MCF 10A (cell line): ENCODE measurements at regions of chr3 and their contacts with region 1.

Region 1: DNA sequence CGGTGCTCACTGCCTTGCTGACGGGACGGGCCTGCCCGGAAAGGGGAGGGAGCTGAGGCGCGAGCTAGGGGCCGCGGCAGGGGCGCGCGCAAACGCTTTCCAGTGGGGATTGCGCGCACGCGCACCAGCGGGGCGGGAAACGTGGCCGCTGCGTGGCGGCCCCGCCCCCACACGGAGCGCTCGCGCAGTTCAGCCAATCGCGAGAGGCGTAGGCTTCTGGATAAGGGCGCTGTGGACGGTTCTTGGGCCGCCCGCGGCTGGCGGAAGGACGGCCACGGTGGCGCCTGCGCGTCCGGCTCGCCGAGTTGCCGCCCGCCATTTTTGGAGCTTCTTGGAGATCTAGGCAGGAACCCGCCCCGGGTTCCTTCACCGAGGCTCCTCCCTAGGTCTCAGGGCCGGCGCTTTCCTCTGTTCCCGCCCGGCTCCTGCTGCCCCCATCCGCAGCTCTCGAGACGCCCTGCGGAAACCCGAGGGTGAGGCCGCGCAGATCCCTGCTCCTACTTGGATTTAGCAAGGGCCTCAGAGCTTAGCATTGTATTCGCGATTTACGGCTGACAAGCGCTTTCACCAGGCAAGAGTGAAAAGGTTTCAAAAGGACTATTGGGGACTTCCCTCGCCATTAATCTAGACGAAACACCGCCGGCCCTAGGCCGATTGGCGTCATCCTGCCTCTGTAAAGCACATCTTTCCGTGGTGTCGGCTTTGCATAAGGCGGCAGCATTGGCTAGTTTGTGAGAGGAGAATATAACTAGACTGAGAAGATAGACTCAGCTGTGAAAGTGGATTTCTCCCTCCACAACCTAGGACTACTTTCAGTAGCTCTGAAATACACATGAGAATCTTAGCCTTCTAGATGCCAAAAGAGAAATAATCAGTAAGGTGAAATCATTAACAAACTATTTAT is 496 bp upstream of the STAG1 start:
- DNase-seq: peak; percentile 97
- H3K4me3 Mint-ChIP-seq: peak overlapping the region; percentile 79
- H3K27ac Mint-ChIP-seq: peak overlapping the region; percentile 97
- H3K4me1 Mint-ChIP-seq: peaks cover 17% of the 10 kb centered on the region
- H3K27me3 Mint-ChIP-seq: no peaks in the 10 kb centered on the region
- CTCF ChIP-seq: peak; percentile 6

Region 2: DNA sequence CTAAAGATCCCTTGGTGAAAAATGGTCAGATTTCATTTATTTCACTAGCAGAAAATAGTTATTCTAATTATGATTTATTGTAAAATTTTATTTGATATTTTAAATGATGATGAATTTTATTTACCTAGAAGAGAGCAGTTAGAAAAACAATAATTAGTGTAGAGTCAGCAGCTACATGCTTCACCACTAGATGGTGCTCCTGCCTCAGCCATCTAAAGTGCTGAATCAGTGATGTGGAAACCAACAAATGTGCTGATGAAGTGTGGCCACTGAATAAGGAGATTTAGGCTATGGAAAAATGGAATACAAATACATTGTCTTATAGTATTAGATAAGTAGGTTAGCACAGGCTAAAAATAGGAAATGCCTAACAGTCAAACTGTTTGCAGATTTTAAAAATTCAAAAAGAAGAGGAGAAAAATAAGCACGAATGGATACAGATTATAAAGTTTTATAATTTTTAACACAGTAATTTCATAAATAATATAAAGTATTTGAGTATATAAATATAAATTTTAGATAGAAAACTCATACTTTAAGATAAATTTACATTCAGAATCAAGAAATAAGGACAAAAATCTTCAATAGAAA is 677.4 kb before region 1 on chr3:
- CTCF ChIA-PET with region 1: interaction called, 21 read pairs
- POLR2A ChIA-PET with region 1: interaction called, 8 read pairs
- intact Hi-C with region 1: loop called (anchors 1 kb)
- DNase-seq: peak; percentile 86
- H3K4me3 Mint-ChIP-seq: no peak overlapping the region
- H3K27ac Mint-ChIP-seq: peak overlapping the region; percentile 8
- H3K4me1 Mint-ChIP-seq: peaks cover 22% of the 10 kb centered on the region
- H3K27me3 Mint-ChIP-seq: no peaks in the 10 kb centered on the region
- CTCF ChIP-seq: peak; percentile 86

Region 3: GRCh38 chr3:136305878-136306277 is 446.8 kb before region 1 on chr3:
- CTCF ChIA-PET with region 1: interaction called, 9 read pairs
- POLR2A ChIA-PET with region 1: no interaction called
- intact Hi-C with region 1: loop called (anchors 1 kb)
- DNase-seq: peak; percentile 63
- H3K4me3 Mint-ChIP-seq: no peak overlapping the region
- H3K27ac Mint-ChIP-seq: no peak overlapping the region
- H3K4me1 Mint-ChIP-seq: no peaks in the 10 kb centered on the region
- H3K27me3 Mint-ChIP-seq: no peaks in the 10 kb centered on the region
- CTCF ChIP-seq: peak; percentile 39

Region 4: GRCh38 chr3:136473716-136474326 is 278.9 kb before region 1 on chr3:
- CTCF ChIA-PET with region 1: no interaction called
- POLR2A ChIA-PET with region 1: no interaction called
- intact Hi-C with region 1: no loop called
- DNase-seq: no peak
- H3K4me3 Mint-ChIP-seq: no peak overlapping the region
- H3K27ac Mint-ChIP-seq: no peak overlapping the region
- H3K4me1 Mint-ChIP-seq: no peaks in the 10 kb centered on the region
- H3K27me3 Mint-ChIP-seq: no peaks in the 10 kb centered on the region
- CTCF ChIP-seq: no peak

Region 5: DNA sequence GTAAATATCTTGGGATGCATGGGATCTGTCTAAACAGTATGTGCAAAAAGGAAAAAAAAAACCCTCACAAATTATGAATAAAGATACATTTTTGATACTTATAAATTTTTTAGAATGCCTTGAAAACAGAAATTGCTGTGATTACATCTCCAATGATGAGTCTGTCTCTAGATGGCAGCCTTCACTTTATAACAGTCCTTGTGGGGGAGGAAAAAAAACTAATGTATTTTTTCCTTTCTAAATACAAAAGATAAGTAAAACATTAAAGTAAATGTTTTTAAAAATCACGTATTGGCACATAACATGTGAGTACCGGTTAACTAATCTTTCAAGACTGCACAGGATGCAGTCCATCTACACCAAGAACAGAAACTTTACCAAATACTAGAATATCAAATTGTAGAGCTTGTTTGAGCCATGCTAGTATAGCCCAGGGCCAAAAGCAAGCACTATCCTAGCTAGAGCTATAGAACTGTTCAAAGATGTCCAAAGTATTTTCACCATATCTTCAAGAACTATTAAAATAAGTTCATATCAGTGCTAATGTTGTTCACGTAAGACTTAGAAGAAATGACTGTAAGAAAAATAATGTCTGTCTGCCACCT is 206.9 kb before region 1 on chr3:
- CTCF ChIA-PET with region 1: interaction called, 20 read pairs
- POLR2A ChIA-PET with region 1: interaction called, 10 read pairs
- intact Hi-C with region 1: loop called (anchors 1 kb)
- DNase-seq: peak; percentile 20
- H3K4me3 Mint-ChIP-seq: no peak overlapping the region
- H3K27ac Mint-ChIP-seq: no peak overlapping the region
- H3K4me1 Mint-ChIP-seq: peaks cover 29% of the 10 kb centered on the region
- H3K27me3 Mint-ChIP-seq: no peaks in the 10 kb centered on the region
- CTCF ChIP-seq: peak; percentile 28

Region 6: DNA sequence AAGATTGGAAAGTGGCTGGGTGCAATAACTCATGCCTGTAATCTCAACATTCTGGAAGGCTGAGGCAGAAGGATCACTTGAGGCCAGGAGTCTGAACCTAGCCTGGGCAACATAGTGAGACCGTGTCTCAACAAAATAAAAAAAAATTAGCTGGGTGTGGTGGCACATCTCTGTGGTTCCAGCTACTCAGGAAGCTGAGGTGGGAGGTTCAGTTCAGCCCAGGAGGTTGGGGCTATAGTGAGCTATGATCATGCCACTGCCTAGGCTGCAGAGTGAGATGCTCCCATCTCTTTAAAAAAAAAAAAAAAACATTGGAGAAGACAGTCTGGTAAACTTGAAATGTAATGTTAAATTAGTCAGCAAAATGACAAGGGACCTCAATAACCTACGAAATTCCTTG is 58.4 kb before region 1 on chr3:
- CTCF ChIA-PET with region 1: no interaction called
- POLR2A ChIA-PET with region 1: no interaction called
- intact Hi-C with region 1: no loop called
- DNase-seq: no peak
- H3K4me3 Mint-ChIP-seq: no peak overlapping the region
- H3K27ac Mint-ChIP-seq: no peak overlapping the region
- H3K4me1 Mint-ChIP-seq: no peaks in the 10 kb centered on the region
- H3K27me3 Mint-ChIP-seq: no peaks in the 10 kb centered on the region
- CTCF ChIP-seq: no peak

Region 7: DNA sequence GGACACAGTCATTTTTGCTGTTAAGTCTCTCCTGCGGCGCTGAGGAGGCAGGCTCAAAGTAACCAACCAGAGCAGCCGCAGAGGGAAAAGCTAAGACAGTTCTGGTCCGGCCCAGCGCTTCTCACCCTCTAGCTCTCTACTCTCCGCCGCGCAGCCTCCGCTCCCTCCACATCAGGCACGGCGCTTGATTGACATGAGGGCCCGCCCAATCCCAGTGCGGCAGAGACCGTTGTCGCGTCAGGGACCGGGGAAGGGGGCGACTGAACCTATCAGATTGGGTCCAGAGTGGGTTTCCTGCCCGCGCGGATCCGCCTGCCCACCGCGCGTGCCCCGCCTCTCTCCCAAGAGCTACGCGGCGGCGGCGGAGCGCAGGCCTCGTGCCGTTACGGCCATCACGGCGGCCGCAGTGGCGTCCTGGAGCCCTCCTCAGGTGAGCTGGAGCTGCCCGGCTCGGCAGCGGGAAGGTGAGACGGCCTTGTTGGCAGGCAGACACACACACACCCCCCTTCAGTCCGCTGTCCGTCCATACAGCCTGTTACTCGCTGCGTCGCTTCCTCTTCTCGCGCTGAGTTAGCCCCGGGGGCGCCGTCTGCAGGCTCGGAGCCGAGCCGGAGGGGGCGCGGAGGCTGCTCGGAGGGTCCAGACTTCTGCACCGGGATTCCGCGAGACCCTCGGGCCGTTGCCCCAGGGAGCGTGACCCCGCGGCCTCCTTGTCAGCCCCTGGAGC is 109.4 kb after region 1 on chr3 and contains the start of gene NCK1:
- CTCF ChIA-PET with region 1: interaction called, 10 read pairs
- POLR2A ChIA-PET with region 1: interaction called, 67 read pairs
- intact Hi-C with region 1: loop called (anchors 1 kb)
- DNase-seq: peak; percentile 98
- H3K4me3 Mint-ChIP-seq: peak within 1 kb of the TSS; percentile 87
- H3K27ac Mint-ChIP-seq: peak within 1 kb of the TSS; percentile 88
- H3K4me1 Mint-ChIP-seq: peaks cover 17% of the 10 kb centered on the region
- H3K27me3 Mint-ChIP-seq: no peaks in the 10 kb centered on the region
- CTCF ChIP-seq: no peak
- total RNA-seq, gene NCK1: 50.4 and 59.4 TPM in 2 replicates

Region 8: DNA sequence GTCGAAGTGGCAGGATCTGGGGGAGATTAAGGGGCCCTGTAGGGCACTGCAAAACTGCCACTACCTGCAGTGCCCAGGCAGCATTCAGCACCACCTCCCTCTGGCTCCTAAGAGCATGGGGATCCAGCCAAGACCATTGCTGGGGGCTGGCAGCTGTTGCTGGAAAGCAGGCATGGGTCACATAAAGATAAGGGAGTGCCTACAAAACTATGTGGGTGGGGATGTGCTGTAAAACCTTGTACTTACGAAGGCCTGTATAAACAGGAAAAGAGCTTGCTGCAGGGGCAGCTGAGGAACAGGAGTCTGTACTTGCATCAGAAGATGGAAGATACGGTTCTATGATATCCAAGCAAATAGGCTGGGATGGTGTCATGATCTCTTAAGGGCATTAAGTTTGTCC is 232.2 kb after region 1 on chr3:
- CTCF ChIA-PET with region 1: interaction called, 5 read pairs
- POLR2A ChIA-PET with region 1: interaction called, 11 read pairs
- intact Hi-C with region 1: no loop called
- DNase-seq: peak; percentile 84
- H3K4me3 Mint-ChIP-seq: peak overlapping the region; percentile 3
- H3K27ac Mint-ChIP-seq: peak overlapping the region; percentile 57
- H3K4me1 Mint-ChIP-seq: peaks cover 63% of the 10 kb centered on the region
- H3K27me3 Mint-ChIP-seq: no peaks in the 10 kb centered on the region
- CTCF ChIP-seq: no peak

Region 9: DNA sequence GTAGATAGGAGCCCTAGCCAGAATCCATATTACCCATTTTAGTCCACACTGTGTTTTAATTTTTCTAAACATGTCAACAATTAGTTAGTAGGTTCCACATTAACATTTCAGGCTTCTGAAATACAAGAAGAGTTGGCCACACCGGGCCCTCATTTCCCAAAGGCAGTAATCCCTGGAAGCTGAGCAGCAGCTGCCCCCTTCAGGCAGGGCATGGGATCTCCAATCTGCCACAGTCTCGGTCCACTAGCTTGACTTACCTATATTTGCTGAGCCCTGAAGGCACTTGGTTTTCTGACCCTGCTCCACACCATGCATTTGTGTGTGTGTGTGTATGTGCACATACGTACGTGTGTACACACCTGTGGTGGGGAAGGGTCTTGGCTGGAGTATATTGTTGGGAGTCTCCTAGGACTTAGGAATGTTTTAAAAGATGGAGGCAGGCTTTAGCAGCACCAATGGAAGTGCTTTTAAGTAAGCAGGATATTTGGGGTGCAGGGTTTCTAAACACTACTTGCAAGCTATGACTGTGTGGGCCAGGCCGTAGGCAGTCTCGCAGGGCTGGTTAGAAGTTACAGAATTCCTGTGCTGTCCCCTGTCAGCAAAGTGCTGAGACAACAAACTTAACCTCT is 940.2 kb after region 1 on chr3:
- CTCF ChIA-PET with region 1: no interaction called
- POLR2A ChIA-PET with region 1: no interaction called
- intact Hi-C with region 1: loop called (anchors 10 kb)
- DNase-seq: peak; percentile 55
- H3K4me3 Mint-ChIP-seq: no peak overlapping the region
- H3K27ac Mint-ChIP-seq: no peak overlapping the region
- H3K4me1 Mint-ChIP-seq: no peaks in the 10 kb centered on the region
- H3K27me3 Mint-ChIP-seq: peaks cover 36% of the 10 kb centered on the region
- CTCF ChIP-seq: peak; percentile 57